Ascending aorta (tissue), 2 donors: ENCODE measurements at regions of chr5 and their contacts with region 1.

Region 1: DNA sequence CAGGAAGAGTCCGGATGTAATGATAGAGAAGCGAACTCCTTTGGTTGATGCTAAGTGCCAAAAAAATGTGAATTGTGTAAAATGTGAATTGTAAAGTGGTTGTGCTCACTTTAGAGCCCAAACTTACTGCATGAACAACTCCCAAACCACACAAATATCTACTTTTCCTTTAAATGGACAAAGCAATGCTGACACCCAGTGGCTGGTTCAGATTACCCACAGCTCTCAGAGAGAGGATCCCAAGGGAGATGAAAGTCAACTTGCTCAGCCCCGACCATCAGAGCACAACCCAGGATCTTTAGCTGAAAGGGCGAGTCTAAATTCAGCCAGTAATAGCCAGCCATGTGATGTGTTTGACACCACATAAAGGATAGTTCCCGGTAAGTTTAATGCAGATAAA is 133.7 kb downstream of the NMUR2 start:
- DNase-seq: no peak
- H3K4me3 ChIP-seq: no peak overlapping the region
- H3K27ac ChIP-seq: no peak overlapping the region
- H3K4me1 ChIP-seq: peaks cover 0 to 14% of the 10 kb centered on the region in 2 donors
- H3K27me3 ChIP-seq: no peaks in the 10 kb centered on the region
- CTCF ChIP-seq: peak; percentile 38 to 63 (median 40)

Region 2: DNA sequence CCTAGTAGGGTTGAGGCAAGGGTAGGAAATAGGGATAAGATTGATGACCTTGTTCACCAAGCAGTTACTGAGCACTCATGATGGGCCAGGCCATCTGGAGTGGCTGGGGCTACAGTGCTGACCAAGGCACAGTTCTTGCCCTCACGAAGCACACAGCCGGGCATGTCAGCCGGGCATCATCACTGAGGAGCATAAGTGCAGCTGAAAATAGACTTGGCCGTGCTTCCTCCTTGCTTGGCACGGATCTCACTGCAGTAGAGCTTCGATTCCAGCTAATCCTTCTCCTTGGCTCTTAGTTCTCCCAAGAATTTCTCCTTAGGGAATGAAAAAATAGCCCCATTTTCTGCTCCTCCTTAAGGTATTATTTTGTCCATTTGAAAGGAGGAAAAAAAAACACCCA is 17.1 kb after region 1 on chr5:
- intact Hi-C with region 1: loop called (anchors 2 kb)
- DNase-seq: peak in 1 of 2 donors; percentile 86
- H3K4me3 ChIP-seq: no peak overlapping the region
- H3K27ac ChIP-seq: peak overlapping the region; percentile 60 to 73
- H3K4me1 ChIP-seq: peaks cover 0 to 12% of the 10 kb centered on the region in 2 donors
- H3K27me3 ChIP-seq: no peaks in the 10 kb centered on the region
- CTCF ChIP-seq: no peak